Ascending aorta (tissue), 2 donors: ENCODE measurements at regions of chr12 and their contacts with region 1.

Region 1: GRCh38 chr12:93419388-93420034 is 22.2 kb downstream of the UBE2N start:
- DNase-seq: no peak
- H3K4me3 ChIP-seq: peak overlapping the region in 1 of 2 donors; percentile 23
- H3K27ac ChIP-seq: peak overlapping the region; percentile 4 to 17
- H3K4me1 ChIP-seq: peaks cover 0 to 24% of the 10 kb centered on the region in 2 donors
- H3K27me3 ChIP-seq: no peaks in the 10 kb centered on the region
- CTCF ChIP-seq: peak; percentile 63 to 68 (median 67)

Region 2: GRCh38 chr12:92784795-92785562 is 634.5 kb before region 1 on chr12:
- intact Hi-C with region 1: loop called (anchors 10 kb)
- DNase-seq: no peak
- H3K4me3 ChIP-seq: no peak overlapping the region
- H3K27ac ChIP-seq: peak overlapping the region in 1 of 2 donors; percentile 17
- H3K4me1 ChIP-seq: peaks cover 0 to 7% of the 10 kb centered on the region in 2 donors
- H3K27me3 ChIP-seq: no peaks in the 10 kb centered on the region
- CTCF ChIP-seq: peak; percentile 35 to 52 (median 38)

Region 3: DNA sequence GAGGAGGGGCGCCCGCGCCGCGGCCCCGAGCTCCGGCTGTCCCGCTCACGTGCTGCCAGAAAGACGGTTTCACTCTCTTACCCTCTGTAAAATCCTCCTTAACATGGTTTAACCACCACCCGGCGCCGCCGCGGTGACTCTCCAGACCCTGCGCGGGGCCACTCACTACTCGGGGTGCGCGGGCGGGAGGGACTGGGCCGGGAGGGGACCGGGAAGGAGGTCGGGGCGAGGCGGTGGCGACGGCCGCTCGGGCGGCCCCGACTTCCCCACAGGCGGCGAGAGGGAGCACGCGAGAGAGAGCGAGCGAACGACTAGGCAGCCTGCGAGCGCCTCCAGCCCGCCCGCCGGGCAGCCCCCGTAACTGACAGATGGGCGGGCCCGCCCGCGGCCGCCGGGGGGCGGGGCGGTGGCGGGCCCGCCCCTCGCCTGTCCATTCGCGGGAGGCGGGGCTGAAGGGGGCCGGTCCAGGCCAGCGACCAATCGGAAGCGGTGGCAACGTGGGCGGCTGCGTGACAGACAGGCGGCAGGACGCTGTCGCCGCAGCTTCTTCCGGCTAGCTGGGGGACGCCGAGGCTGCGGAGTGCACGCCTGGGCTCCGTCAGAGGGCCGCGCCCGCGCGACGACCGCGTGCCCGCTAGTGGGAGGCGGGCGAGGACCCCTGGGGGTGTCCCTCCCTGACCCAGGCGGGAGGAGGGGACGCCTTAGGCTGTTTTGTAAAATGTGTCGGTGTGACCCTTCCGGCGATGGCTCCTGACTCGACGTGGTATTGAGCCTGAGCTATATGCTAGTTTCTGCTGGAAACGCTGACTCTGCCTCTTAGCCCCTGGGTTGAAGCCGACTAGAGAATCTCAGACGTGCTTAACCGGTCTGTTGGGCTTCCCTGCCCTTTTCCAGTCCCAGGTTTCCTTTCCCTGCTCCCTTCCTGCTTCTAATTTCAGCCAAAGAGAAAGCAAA is 490.3 kb before region 1 on chr12 and contains the start of gene EEA1:
- intact Hi-C with region 1: loop called (anchors 5 kb)
- DNase-seq: peak; percentile 82 to 97
- H3K4me3 ChIP-seq: peak within 1 kb of the TSS; percentile 69 to 100
- H3K27ac ChIP-seq: peak within 1 kb of the TSS; percentile 98 to 99
- H3K4me1 ChIP-seq: peaks cover 5 to 13% of the 10 kb centered on the region in 2 donors
- H3K27me3 ChIP-seq: no peaks in the 10 kb centered on the region
- CTCF ChIP-seq: peak; percentile 11 to 36 (median 30)
- total RNA-seq, gene EEA1: 10.9 TPM

Region 4: GRCh38 chr12:92968176-92968813 is 451.2 kb before region 1 on chr12:
- intact Hi-C with region 1: no loop called
- DNase-seq: no peak
- H3K4me3 ChIP-seq: no peak overlapping the region
- H3K27ac ChIP-seq: no peak overlapping the region
- H3K4me1 ChIP-seq: peaks cover 0 to 7% of the 10 kb centered on the region in 2 donors
- H3K27me3 ChIP-seq: no peaks in the 10 kb centered on the region
- CTCF ChIP-seq: no peak

Region 5: DNA sequence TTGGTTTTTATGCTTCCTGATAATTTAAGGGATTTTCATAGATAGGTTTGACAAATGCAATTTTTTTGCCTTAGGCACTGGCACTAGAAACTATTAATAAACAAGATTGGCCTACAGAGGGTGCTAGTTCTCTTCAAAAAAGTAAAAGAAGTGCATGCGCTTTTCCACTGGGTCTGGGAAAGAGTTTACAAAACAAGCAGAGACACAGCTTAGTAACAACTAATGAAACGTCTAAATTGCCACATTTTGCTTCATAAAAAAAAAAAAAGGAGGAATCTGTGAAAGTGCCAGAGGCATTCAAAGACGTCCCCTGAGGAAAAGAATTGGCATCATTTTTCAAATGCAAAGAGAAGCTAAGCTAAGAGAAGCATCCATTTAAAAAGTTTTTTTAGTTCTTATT is 432.1 kb before region 1 on chr12:
- intact Hi-C with region 1: loop called (anchors 2 kb)
- DNase-seq: no peak
- H3K4me3 ChIP-seq: no peak overlapping the region
- H3K27ac ChIP-seq: peak overlapping the region; percentile 46 to 50
- H3K4me1 ChIP-seq: peaks cover 0 to 4% of the 10 kb centered on the region in 2 donors
- H3K27me3 ChIP-seq: no peaks in the 10 kb centered on the region
- CTCF ChIP-seq: peak; percentile 35 to 66 (median 44)

Region 6: DNA sequence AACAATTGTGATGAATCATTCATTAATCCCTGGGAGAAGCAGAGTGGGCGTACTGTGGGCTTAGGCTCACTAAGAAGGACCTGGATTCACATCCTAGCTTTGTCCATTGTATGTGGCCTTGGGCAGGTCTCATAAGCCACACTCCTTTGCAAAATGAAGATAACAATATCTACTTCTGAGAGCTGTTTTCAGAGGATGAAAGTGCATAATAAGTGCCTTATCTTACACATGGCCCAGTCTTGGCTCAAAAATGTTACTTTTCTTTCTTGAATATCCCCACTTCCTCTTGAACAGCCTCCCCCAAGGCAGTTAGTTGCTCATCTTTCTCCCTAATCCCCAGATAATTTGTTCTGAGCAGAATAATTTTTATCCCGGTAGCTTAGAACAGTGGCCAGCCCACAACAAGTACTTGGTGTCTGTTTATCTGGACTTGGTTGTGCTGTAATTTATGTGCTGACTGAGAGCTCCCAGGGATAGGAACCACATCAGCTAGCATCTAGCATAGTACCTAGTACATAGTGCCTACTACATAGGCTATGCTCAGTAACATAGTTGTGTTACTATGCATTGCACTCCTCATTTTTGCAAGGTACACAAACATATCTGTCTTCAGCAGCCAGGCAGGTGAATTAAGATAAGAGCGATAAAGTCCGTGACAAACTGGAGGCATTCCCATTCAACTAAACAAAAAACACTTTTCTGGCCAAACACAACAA is 103.4 kb before region 1 on chr12:
- intact Hi-C with region 1: no loop called
- DNase-seq: no peak
- H3K4me3 ChIP-seq: no peak overlapping the region
- H3K27ac ChIP-seq: no peak overlapping the region
- H3K4me1 ChIP-seq: no peaks in the 10 kb centered on the region
- H3K27me3 ChIP-seq: no peaks in the 10 kb centered on the region
- CTCF ChIP-seq: no peak